ENCODE measurements at regions of chr9 and their contacts with region 1.

Region 1: DNA sequence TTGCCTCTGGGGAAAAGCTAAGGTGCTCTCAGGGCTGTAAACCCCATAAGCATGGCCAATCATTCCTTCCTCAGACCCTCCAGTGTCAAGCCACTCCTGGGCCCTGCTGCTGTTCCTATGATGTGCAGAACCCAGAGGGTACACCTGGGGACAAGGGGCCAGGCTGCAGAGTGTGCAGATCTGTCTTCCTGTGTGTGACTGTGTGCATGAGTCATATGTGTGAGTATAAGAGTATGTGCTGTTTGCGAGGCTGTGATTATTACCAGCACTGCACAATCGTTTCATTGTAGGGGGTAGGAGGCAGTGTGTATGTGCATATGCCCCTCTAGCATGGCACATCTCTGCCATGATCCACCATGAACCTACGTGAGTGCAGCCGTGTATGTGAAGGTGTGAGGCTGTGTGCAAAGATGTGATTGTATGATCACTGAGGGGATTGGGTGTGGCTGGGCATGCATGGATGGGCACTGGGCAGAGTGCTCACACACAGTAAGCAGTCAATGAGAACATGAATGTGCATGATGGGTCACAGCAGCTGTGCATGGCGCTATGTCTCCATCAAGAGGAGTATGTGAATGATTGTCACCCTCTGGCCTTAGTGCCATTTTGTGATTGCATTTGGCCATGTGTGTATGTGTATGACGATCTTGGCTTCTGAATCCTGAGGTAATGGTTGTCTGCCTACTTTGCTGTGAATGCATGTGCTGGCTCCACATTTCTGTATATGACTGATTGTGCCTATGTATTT is 2.4 kb upstream of the OR1K1 start:
- DNase-seq: peak; percentile 38
- H3K4me3 ChIP-seq: no peak overlapping the region
- H3K27ac ChIP-seq: no peak overlapping the region
- H3K4me1 ChIP-seq: no peaks in the 10 kb centered on the region
- H3K27me3 ChIP-seq: no peaks in the 10 kb centered on the region

Region 2: GRCh38 chr9:122498883-122499288 is 298.6 kb before region 1 on chr9:
- in situ Hi-C with region 1: loop called (anchors 10 kb)
- DNase-seq: peak; percentile 73
- H3K4me3 ChIP-seq: no peak overlapping the region
- H3K27ac ChIP-seq: no peak overlapping the region
- H3K4me1 ChIP-seq: no peaks in the 10 kb centered on the region
- H3K27me3 ChIP-seq: no peaks in the 10 kb centered on the region

Region 3: GRCh38 chr9:123091459-123091858 is 294.0 kb after region 1 on chr9:
- in situ Hi-C with region 1: no loop called
- DNase-seq: no peak
- H3K4me3 ChIP-seq: no peak overlapping the region
- H3K27ac ChIP-seq: no peak overlapping the region
- H3K4me1 ChIP-seq: no peaks in the 10 kb centered on the region
- H3K27me3 ChIP-seq: no peaks in the 10 kb centered on the region

Measured in GM23248 (cell line).